ENCODE measurements at regions of chr9 and their contacts with region 1.

Region 1: DNA sequence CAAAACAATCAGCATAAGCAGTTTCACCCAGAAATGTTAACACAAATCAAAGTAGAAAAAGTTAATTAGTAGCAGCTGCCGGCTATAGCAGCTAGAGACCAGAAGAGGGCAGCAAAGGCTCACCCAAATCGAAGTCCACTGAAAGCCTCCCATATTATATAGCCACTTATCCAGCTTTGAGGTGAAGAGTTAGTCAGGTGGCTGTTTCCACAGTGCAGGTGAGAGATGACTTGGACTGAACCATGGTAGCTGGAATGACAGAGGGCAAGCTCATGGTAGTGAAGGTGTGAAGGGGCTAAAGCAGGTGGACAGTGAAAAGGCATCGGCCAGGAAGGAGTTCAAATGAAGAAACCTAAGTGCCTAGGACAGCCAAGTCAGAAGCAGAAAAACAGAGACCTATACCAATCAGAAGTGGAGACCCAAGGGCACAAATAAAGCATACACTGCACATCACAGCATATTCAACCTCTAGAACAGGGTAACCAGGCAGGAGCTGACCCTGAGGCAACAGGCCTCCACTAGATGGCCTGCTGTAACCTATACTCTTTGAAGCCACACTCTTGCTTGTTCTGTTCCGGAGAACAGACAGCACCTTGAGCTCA is 7.2 kb upstream of the RNF38 start:
- DNase-seq: peak; percentile 66 to 90
- H3K4me3 ChIP-seq: no peak overlapping the region
- H3K27ac ChIP-seq: peak overlapping the region in 1 of 5 donors; percentile 20
- H3K4me1 ChIP-seq: peaks cover 0 to 23% (median 9%) of the 10 kb centered on the region in 4 donors
- H3K27me3 ChIP-seq: no peaks in the 10 kb centered on the region
- CTCF ChIP-seq: peak in 5 of 7 experiments; percentile 81 to 95 (median 92)
- EP300 ChIP-seq: no peak
- POLR2A ChIP-seq: no peak

Region 2: GRCh38 chr9:35816708-35817107 is 590.5 kb before region 1 on chr9:
- intact Hi-C with region 1: no loop called
- DNase-seq: no peak
- H3K4me3 ChIP-seq: no peak overlapping the region
- H3K27ac ChIP-seq: no peak overlapping the region
- H3K4me1 ChIP-seq: peaks cover 15 to 28% (median 26%) of the 10 kb centered on the region in 4 donors
- H3K27me3 ChIP-seq: no peaks in the 10 kb centered on the region
- CTCF ChIP-seq: no peak
- EP300 ChIP-seq: no peak
- POLR2A ChIP-seq: no peak

Region 3: GRCh38 chr9:36560857-36561221 is 153.6 kb after region 1 on chr9:
- intact Hi-C with region 1: loop called (anchors 5 kb)
- DNase-seq: no peak
- H3K4me3 ChIP-seq: no peak overlapping the region
- H3K27ac ChIP-seq: no peak overlapping the region
- H3K4me1 ChIP-seq: peaks cover 0 to under 1% (median 0%) of the 10 kb centered on the region in 4 donors
- H3K27me3 ChIP-seq: no peaks in the 10 kb centered on the region
- CTCF ChIP-seq: no peak
- EP300 ChIP-seq: no peak
- POLR2A ChIP-seq: no peak

Region 4: GRCh38 chr9:37017546-37017945 is 610.3 kb after region 1 on chr9:
- intact Hi-C with region 1: no loop called
- DNase-seq: no peak
- H3K4me3 ChIP-seq: no peak overlapping the region
- H3K27ac ChIP-seq: no peak overlapping the region
- H3K4me1 ChIP-seq: no peaks in the 10 kb centered on the region
- H3K27me3 ChIP-seq: peaks cover 0 to 92% (median 20%) of the 10 kb centered on the region in 3 donors
- CTCF ChIP-seq: no peak
- EP300 ChIP-seq: no peak
- POLR2A ChIP-seq: no peak